WTC11 (cell line): ENCODE measurements at regions of chr12 and their contacts with region 1.

Region 1: DNA sequence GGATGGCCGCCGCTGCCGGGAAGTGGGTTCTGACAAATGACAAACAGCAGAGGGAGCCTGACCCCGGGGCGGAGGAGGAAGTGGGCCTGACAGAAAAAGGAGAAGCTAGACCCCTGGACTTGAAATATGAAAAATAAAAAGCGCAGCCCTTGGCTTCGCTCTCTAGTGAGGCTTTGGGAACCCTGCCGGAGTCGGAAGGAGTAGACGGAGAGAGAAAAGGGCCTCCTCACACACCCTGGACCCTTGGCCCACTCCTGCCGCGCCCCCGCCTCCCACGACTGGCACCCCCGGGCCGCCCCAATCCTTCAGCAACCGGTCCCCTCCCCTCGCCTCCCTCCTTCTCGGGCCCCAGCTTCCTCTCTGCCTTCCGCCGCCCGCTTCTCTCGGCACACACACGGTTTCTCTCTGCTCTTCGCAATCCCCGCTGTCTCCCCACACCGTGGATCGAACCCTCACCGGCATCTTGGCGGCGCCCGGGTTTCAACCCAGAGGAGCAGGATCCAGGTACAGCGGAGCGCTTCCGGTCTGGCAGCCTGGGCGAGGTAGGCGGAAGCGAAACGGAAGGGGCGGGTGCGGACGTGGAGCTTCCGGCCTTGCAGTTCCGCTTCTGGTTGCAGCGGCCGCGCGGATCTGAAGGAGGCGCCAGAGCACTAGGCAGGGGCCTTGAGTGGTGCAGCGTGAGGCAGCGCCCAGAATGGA is at the start of gene ARPC3:
- DNase-seq: peak; percentile 94
- ATAC-seq: peak; percentile 97
- H3K4me3 Mint-ChIP-seq: peak within 1 kb of the TSS; percentile 100
- H3K27ac Mint-ChIP-seq: peak within 1 kb of the TSS; percentile 98
- H3K4me1 Mint-ChIP-seq: peaks cover 7% of the 10 kb centered on the region; the same call in 1 of the 2 replicates
- H3K27me3 Mint-ChIP-seq: no peaks in the 10 kb centered on the region; the same call in 1 of the 2 replicates
- CTCF ChIP-seq: peak; percentile 50; the same call in 1 of the 2 replicates
- total RNA-seq, gene ARPC3: 145 to 163 TPM (median 149 TPM) in 3 replicates

Region 2: DNA sequence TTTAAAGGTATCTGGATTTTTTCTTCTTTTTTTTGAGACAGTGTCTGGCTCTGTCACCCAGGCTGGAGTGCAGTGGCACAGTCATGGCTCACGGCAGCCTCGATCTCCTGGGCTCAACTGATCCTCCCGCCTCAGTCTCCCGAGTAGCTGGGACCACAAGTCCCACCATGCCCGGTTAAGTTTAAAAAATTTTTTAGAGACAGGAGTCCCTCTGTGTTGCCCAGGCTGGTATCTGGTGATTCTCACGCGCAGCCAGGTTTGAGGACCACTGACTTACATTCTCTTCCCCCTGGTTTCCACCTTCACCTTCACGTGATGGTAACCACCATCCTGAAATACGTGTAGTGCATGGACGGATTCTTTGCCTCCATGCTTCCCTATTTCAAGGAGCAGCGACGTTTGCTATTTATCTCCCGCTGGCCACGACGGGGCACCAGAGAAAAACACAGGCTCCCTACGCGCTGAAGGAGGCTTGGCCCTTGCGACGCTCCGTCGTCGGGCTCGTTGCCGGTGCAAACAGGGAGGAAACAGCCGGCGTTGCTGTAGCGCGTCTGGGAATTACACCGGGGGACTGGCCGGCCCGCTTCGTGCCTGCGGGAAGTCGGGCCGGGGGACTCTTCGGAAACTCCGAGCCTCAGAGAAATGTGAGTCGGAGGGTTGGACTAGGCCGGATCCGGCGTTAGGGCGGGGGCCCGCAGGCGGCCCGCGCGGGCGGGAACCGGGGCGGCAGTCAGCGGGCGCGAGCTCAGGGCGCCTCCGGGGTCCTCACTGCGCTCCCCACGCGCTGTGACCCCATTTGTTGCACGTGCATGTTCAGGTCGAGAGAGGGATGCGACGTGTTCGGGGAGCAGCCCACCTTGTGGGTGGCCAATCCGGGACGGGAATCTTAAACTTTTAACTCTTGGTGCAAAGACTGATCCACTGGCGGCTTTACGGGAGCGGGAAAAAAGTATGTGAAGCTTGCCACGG is 549.9 kb before region 1 on chr12 and contains the start of gene TCHP:
- CTCF ChIA-PET with region 1: no interaction called
- POLR2A ChIA-PET with region 1: no interaction called
- DNase-seq: peak; percentile 74
- ATAC-seq: peak; percentile 49
- H3K4me3 Mint-ChIP-seq: peak within 1 kb of the TSS; percentile 85
- H3K27ac Mint-ChIP-seq: peak within 1 kb of the TSS; percentile 81
- H3K4me1 Mint-ChIP-seq: peaks cover 24% of the 10 kb centered on the region
- H3K27me3 Mint-ChIP-seq: peaks cover 99% of the 10 kb centered on the region
- CTCF ChIP-seq: no peak
- total RNA-seq, gene TCHP: 7.9 to 10.1 TPM (median 10.0 TPM) in 3 replicates

Region 3: GRCh38 chr12:110039085-110039807 is 410.7 kb before region 1 on chr12:
- CTCF ChIA-PET with region 1: no interaction called
- POLR2A ChIA-PET with region 1: no interaction called
- DNase-seq: no peak
- ATAC-seq: peak; percentile 49
- H3K4me3 Mint-ChIP-seq: no peak overlapping the region
- H3K27ac Mint-ChIP-seq: peak overlapping the region; percentile 68
- H3K4me1 Mint-ChIP-seq: peaks cover 18% of the 10 kb centered on the region
- H3K27me3 Mint-ChIP-seq: no peaks in the 10 kb centered on the region; the same call in 1 of the 2 replicates
- CTCF ChIP-seq: no peak

Region 4: DNA sequence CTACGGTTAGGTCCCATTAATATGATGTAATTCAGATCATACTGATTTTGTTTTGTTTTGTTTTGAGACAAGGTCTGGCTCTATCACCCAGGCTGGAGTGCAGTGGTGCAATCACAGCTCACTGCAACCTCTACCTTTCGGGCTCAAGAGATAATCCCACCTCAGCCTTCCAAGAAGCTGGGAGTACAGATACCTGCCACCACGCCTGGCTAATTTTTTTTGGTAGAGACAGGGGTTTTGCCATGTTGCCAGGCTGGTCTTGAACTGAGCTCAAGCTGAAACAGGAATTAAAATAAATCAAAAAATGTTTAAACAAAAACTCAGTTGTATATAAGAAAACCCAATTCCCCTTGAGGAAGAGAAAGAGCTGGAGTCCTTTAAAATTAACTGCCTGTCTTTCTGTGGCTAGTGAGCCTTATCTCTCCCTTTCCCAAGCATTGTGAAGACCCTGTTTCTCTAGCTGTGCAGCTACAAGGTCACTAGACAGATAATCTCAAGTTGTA is 28.7 kb before region 1 on chr12:
- CTCF ChIA-PET with region 1: interaction called, 12 read pairs
- POLR2A ChIA-PET with region 1: no interaction called
- DNase-seq: no peak
- ATAC-seq: no peak
- H3K4me3 Mint-ChIP-seq: no peak overlapping the region
- H3K27ac Mint-ChIP-seq: no peak overlapping the region
- H3K4me1 Mint-ChIP-seq: peaks cover 8% of the 10 kb centered on the region; the same call in 1 of the 2 replicates
- H3K27me3 Mint-ChIP-seq: 0 out of 2 replicates have a peak, but pooled peaks cover 3% of the 10 kb centered on the region
- CTCF ChIP-seq: no peak

Region 5: GRCh38 chr12:110468212-110469048 is 18.5 kb after region 1 on chr12 and contains the starts of genes FAM216A and GPN3:
- CTCF ChIA-PET with region 1: interaction called, 37 read pairs
- POLR2A ChIA-PET with region 1: interaction called, 18 read pairs
- DNase-seq: peak; percentile 97
- ATAC-seq: peak; percentile 87
- H3K4me3 Mint-ChIP-seq: peak within 1 kb of the TSS; percentile 100
- H3K27ac Mint-ChIP-seq: peak within 1 kb of the TSS; percentile 100
- H3K4me1 Mint-ChIP-seq: peaks cover 22% of the 10 kb centered on the region
- H3K27me3 Mint-ChIP-seq: no peaks in the 10 kb centered on the region
- CTCF ChIP-seq: no peak
- total RNA-seq, gene FAM216A: 16.9 to 20.2 TPM (median 19.7 TPM) in 3 replicates
- total RNA-seq, gene GPN3: 46.4 to 53.0 TPM (median 51.2 TPM) in 3 replicates